HEK293 (cell line): ENCODE measurements at regions of chr20 and their contacts with region 1.

Region 1: GRCh38 chr20:49534255-49534712 is 33.7 kb downstream of the PTGIS start:
- H3K4me3 ChIP-seq: no peak overlapping the region
- H3K27ac ChIP-seq: no peak overlapping the region
- H3K4me1 ChIP-seq: no peaks in the 10 kb centered on the region
- CTCF ChIP-seq: 0 out of 2 replicates have a peak, but pooled peaks have one; percentile 32

Region 2: DNA sequence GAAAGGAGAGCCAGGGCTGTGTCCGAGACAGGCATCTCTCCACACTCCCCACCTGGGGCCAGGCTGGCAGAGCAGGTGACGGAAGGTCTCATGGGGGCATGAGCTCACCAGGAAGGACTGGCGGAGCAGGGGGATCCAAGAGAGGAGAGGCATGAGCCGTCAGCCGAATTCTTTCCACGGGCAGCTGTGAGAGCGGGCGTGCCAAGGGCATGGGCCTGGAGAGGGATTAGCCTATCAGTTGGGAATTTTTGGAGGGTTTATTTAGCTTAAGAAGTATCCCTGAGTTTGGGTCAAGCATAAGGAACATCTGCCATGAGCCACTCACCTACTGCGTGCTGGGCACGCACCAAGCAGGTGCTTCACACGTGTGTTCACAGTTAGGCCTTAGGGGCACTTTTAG is 196.2 kb before region 1 on chr20:
- CTCF ChIA-PET with region 1: interaction called, 69 read pairs
- POLR2A ChIA-PET with region 1: no interaction called
- H3K4me3 ChIP-seq: no peak overlapping the region
- H3K27ac ChIP-seq: no peak overlapping the region
- H3K4me1 ChIP-seq: no peaks in the 10 kb centered on the region
- CTCF ChIP-seq: no peak

Region 3: GRCh38 chr20:49549811-49550551 is 15.7 kb after region 1 on chr20:
- CTCF ChIA-PET with region 1: interaction called, 42 read pairs
- POLR2A ChIA-PET with region 1: no interaction called
- H3K4me3 ChIP-seq: no peak overlapping the region
- H3K27ac ChIP-seq: no peak overlapping the region
- H3K4me1 ChIP-seq: no peaks in the 10 kb centered on the region
- CTCF ChIP-seq: no peak

Region 4: DNA sequence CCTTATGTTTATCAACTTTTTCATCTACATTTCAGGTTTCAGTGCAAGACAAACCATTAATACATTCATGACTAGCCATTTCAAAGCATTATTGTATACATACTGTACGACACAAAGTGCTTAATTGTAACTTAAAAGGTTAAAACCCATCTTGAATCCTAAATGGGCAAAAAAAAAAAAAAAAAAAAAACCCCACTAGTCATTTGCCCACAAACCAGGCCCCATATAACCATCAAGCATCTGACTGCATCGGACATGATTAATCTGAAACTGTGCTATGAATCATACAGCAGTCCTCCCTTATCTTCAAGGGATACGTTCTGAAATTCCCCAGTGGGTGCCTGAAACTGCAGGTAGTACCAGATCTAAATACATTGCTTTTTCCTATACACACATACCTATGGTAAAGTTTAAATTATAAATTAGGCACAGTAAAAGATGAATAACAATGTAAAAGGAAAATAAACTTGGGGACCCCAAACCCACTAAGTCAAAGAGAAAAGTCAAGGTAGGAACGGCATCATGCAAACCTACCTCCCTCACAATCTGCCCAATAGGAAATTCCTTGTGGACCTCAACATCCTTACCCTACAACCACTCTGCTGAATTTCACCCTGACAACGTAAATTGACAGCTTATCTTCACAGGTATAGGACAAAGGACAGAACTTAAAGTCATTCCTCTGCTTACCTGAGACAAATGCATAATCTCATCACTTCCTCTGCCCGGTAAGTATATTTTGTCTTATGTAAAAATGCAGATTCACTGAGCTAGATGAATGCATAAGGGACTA is 165.1 kb after region 1 on chr20:
- CTCF ChIA-PET with region 1: no interaction called
- POLR2A ChIA-PET with region 1: no interaction called
- H3K4me3 ChIP-seq: no peak overlapping the region
- H3K27ac ChIP-seq: no peak overlapping the region
- H3K4me1 ChIP-seq: peaks cover 21% of the 10 kb centered on the region
- CTCF ChIP-seq: no peak